ENCODE measurements at regions of chr11 and their contacts with region 1.

Region 1: GRCh38 chr11:6531267-6531752 is 34.2 kb downstream of the DNHD1 start:
- DNase-seq: no peak
- H3K4me3 ChIP-seq: no peak overlapping the region
- H3K27me3 ChIP-seq: no peaks in the 10 kb centered on the region
- CTCF ChIP-seq: peak; percentile 82

Region 2: DNA sequence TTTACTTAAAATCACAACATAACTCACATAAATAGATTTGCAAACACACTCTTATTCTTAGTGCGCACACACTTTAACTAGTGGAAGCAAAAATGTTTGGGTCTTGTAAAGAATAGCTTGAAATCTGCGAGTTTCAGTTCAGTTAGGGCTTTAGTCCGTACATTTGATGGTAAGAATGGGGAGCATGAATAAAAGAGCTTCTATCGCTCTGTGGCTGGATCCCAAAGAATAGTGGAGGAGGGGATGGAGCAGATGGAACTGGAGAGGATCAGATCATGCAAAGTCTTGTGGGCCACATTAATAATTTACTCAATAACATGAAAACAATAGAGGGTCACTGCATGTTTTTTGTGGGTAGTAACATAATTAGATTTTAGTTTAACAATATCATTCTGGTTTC is 10.0 kb after region 1 on chr11:
- CTCF ChIA-PET with region 1: interaction called, 28 read pairs
- POLR2A ChIA-PET with region 1: no interaction called
- DNase-seq: no peak
- H3K4me3 ChIP-seq: no peak overlapping the region
- H3K27me3 ChIP-seq: no peaks in the 10 kb centered on the region
- CTCF ChIP-seq: no peak

Region 3: DNA sequence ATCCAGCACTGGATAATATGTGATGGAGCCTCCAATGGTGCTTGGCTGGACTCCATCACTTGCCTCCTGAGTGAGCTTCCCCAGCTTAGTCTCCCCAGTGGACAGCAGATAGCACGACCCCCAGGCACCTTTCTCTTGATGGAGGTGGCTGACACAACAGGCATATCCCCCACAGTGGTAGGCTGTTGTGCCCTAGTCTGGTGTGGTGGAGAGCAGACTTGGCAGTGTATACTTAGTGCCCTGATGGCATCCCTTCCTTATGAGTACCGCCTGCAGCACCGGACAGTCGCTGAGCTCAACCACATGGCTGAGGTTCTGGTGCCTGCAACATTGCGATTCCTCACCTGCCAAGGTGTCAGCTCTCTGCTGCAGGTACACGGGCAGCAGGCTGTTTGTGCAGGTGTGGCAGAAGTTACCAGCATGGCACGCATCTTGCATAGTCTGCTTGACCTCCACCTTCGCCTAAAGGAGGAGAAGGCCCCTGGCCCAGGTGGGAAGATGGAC is 15.9 kb after region 1 on chr11:
- CTCF ChIA-PET with region 1: interaction called, 28 read pairs
- POLR2A ChIA-PET with region 1: no interaction called
- DNase-seq: no peak
- H3K4me3 ChIP-seq: no peak overlapping the region
- H3K27me3 ChIP-seq: no peaks in the 10 kb centered on the region
- CTCF ChIP-seq: no peak

Region 4: DNA sequence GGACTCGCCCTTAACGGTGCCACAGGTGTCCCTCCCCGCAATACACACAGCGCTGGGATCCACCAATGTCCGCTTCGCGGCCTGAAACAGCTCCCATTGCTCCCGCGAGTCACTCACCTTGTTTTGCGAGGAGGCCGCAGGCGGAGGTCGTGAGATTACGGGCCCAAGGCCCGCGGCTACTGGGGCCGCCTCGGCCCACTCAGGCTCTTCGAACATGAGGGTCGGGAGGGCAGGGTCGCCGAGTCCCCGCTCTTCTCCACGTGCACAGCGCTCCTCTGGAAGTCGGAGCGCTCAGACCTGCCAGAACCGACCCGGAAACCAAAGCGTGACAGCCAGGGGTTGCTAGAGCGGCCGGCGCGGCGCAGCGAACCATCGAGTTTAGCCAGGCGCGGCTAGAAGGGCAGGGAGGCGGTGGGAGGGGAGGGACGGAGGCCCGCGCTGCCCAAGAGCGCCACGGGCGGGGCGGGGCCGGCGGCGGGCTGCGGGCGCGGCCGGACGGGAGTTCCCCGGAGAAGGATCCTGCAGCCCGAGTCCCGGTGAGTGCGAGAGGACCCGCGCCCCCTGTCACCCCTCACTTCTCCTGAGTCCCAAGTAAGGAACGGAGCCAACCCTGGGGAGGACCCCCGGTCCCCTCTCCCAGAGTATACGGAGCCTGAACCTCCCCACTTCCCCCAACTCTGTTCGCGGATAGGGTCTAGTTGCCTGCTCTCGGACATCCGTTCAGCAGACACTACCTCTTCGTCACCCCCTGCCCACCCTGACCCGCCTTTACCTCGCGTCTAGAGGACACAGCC is 72.2 kb after region 1 on chr11 and contains the starts of genes ILK and RRP8:
- CTCF ChIA-PET with region 1: interaction called, 11 read pairs
- POLR2A ChIA-PET with region 1: no interaction called
- DNase-seq: peak; percentile 45
- H3K4me3 ChIP-seq: peak within 1 kb of the TSS; percentile 84
- H3K27me3 ChIP-seq: no peaks in the 10 kb centered on the region
- CTCF ChIP-seq: peak; percentile 37
- polyA plus RNA-seq, gene ILK: 449 and 654 TPM in 2 replicates
- polyA plus RNA-seq, gene RRP8: 9.9 and 14.4 TPM in 2 replicates

Region 5: GRCh38 chr11:6682936-6683861 is 151.9 kb after region 1 on chr11 and contains the start of gene MRPL17:
- CTCF ChIA-PET with region 1: interaction called, 21 read pairs
- POLR2A ChIA-PET with region 1: interaction called, 4 read pairs
- DNase-seq: peak; percentile 97
- H3K4me3 ChIP-seq: peak within 1 kb of the TSS; percentile 84
- H3K27me3 ChIP-seq: no peaks in the 10 kb centered on the region
- CTCF ChIP-seq: peak; percentile 92
- polyA plus RNA-seq, gene MRPL17: 68.9 and 82.3 TPM in 2 replicates